ENCODE measurements at regions of chr6 and their contacts with region 1.

Region 1: DNA sequence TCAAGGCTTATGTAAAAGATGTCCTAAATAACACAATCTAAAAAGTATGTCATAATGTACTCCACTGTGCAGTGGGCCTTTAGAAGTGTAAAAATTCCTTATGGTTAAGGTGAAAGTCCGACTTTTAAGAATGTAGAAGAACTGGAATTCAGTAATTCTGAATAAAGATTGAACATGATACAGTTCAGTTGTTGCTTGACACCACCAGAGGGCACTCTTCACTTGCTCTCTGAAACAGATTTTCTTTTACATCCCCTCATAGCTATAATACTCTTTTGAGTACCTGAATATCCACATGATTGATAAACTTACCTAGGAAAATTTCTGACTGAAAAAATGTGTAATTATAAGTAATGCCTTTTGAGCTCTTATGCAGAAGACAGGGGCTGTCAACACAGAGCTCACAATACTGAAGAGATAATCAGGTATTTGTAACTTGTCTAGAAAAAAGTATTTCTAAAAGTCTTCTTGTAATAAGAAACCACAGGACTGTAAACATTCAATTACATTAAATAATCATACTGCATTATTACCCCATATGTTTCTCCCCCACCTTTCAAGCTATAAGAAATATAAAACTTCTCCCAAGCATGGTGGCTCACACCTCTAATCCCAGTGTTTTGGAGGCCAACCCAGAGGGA is 92.1 kb downstream of the POPDC3 start:
- DNase-seq: peak in 1 of 2 experiments; percentile 56
- H3K4me3 ChIP-seq: no peak overlapping the region
- H3K4me3 Mint-ChIP-seq: peak overlapping the region; percentile 27
- H3K27ac Mint-ChIP-seq: no peak overlapping the region
- H3K4me1 ChIP-seq: peaks cover 13% of the 10 kb centered on the region
- H3K4me1 Mint-ChIP-seq: peaks cover 18% of the 10 kb centered on the region
- H3K27me3 ChIP-seq: no peaks in the 10 kb centered on the region
- H3K27me3 Mint-ChIP-seq: no peaks in the 10 kb centered on the region
- CTCF ChIP-seq: peak; percentile 74 to 78

Region 2: GRCh38 chr6:104969785-104970581 is 117.7 kb before region 1 on chr6:
- CTCF ChIA-PET with region 1: no interaction called
- POLR2A ChIA-PET with region 1: no interaction called
- intact Hi-C with region 1: no loop called
- DNase-seq: no peak
- H3K4me3 ChIP-seq: no peak overlapping the region
- H3K4me3 Mint-ChIP-seq: no peak overlapping the region
- H3K27ac Mint-ChIP-seq: no peak overlapping the region
- H3K4me1 ChIP-seq: peaks cover 5% of the 10 kb centered on the region; the same call in 1 of the 2 replicates
- H3K4me1 Mint-ChIP-seq: no peaks in the 10 kb centered on the region
- H3K27me3 ChIP-seq: no peaks in the 10 kb centered on the region
- H3K27me3 Mint-ChIP-seq: no peaks in the 10 kb centered on the region
- CTCF ChIP-seq: no peak

Region 3: DNA sequence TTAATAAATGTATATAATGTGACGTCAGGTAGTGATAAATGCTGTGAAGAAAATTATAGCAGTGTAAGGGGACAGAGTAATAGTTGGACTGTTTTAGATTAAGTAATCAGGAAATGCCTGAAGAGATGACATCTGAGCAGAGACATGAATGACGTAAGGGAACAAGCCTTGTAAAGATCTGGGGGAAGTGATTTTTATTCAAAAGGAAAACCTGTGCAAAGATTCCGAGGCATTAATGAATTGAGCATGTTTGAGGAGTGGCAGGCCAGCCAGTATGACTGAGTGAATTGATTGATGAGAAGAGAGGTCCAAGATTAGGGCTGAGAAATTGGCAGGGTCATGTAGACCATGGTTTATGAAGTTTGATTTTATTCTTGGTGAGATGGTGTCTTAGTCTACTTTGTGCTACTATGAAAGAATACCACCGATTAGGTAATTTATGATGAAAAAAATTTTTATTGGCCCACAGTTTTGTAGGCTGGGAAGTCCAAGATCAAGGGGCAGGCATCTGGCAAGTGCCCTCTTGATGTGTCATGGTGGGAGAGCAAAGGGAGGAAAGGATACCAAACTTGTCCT is 35.7 kb before region 1 on chr6:
- CTCF ChIA-PET with region 1: no interaction called
- POLR2A ChIA-PET with region 1: no interaction called
- intact Hi-C with region 1: no loop called
- DNase-seq: no peak
- H3K4me3 ChIP-seq: no peak overlapping the region
- H3K4me3 Mint-ChIP-seq: no peak overlapping the region
- H3K27ac Mint-ChIP-seq: no peak overlapping the region
- H3K4me1 ChIP-seq: peaks cover 5% of the 10 kb centered on the region
- H3K4me1 Mint-ChIP-seq: no peaks in the 10 kb centered on the region
- H3K27me3 ChIP-seq: no peaks in the 10 kb centered on the region
- H3K27me3 Mint-ChIP-seq: no peaks in the 10 kb centered on the region
- CTCF ChIP-seq: no peak

Region 4: GRCh38 chr6:105136431-105137350 is 49.0 kb after region 1 on chr6:
- CTCF ChIA-PET with region 1: interaction called, 8 read pairs
- POLR2A ChIA-PET with region 1: no interaction called
- intact Hi-C with region 1: loop called (anchors 5 kb)
- DNase-seq: peak; percentile 50 to 69
- H3K4me3 ChIP-seq: peak overlapping the region; percentile 74
- H3K4me3 Mint-ChIP-seq: peak overlapping the region; percentile 76
- H3K27ac Mint-ChIP-seq: no peak overlapping the region
- H3K4me1 ChIP-seq: no peaks in the 10 kb centered on the region
- H3K4me1 Mint-ChIP-seq: no peaks in the 10 kb centered on the region
- H3K27me3 ChIP-seq: no peaks in the 10 kb centered on the region
- H3K27me3 Mint-ChIP-seq: peaks cover 10% of the 10 kb centered on the region
- CTCF ChIP-seq: peak in 1 of 2 experiments; percentile 8

Region 5: DNA sequence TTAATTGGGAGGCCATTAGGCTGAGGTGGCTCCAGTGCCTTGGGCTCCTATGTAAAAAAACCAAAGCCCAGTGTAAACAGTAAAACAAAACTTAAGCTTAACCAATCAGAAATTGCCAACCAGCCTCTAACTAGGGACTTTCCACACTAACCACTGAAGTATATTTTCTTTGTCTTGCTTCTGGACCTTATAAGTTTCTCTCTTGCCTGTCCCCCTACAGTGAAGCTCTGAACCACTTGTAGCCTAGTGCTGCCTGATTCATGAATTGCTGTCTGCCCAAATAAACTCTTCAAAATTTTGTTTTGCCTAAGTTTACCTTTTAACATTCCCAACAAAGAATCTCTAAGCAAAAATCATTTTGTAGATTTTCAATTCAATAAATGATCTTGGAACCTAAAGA is 64.0 kb after region 1 on chr6:
- CTCF ChIA-PET with region 1: no interaction called
- POLR2A ChIA-PET with region 1: no interaction called
- intact Hi-C with region 1: loop called (anchors 2 kb)
- DNase-seq: no peak
- H3K4me3 ChIP-seq: no peak overlapping the region
- H3K4me3 Mint-ChIP-seq: no peak overlapping the region
- H3K27ac Mint-ChIP-seq: no peak overlapping the region
- H3K4me1 ChIP-seq: no peaks in the 10 kb centered on the region
- H3K4me1 Mint-ChIP-seq: no peaks in the 10 kb centered on the region
- H3K27me3 ChIP-seq: no peaks in the 10 kb centered on the region
- H3K27me3 Mint-ChIP-seq: no peaks in the 10 kb centered on the region
- CTCF ChIP-seq: no peak

Region 6: GRCh38 chr6:105272786-105273185 is 185.1 kb after region 1 on chr6:
- CTCF ChIA-PET with region 1: interaction called, 4 read pairs
- POLR2A ChIA-PET with region 1: no interaction called
- intact Hi-C with region 1: loop called (anchors 5 kb)
- DNase-seq: peak; percentile 57 to 70
- H3K4me3 ChIP-seq: no peak overlapping the region
- H3K4me3 Mint-ChIP-seq: no peak overlapping the region
- H3K27ac Mint-ChIP-seq: no peak overlapping the region
- H3K4me1 ChIP-seq: peaks cover 15% of the 10 kb centered on the region
- H3K4me1 Mint-ChIP-seq: peaks cover 16% of the 10 kb centered on the region
- H3K27me3 ChIP-seq: no peaks in the 10 kb centered on the region
- H3K27me3 Mint-ChIP-seq: no peaks in the 10 kb centered on the region
- CTCF ChIP-seq: no peak

Region 7: DNA sequence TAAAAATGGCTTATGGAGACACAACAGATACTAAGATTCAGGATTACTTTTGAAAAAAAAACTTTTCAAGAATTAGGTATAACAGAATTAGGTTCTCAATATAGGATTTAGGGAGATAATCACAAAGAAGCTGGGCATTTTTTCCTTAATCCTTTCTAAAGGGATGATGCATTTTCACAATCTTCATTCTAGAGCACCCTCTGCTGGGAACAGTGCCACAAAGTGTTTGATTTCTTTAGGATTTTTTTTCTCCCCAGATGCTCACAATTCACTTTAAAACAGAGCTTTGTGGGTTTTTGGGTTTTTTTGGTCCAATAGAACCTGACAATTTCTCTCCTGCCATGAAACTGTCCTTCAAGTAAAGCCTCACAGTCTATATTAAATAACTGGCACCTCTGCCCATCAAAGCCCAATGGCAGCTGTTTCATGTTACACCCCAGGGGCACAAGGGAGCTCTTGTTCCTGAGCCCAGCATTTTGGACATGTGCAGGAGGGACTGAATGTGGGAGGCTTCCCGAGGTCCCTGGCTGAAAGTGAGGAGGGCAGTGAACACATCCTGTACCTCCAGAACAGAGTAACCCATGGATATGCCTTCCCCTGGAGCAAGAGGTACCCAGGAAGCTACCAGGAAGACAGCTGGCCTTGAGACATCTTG is 275.5 kb after region 1 on chr6:
- CTCF ChIA-PET with region 1: interaction called, 13 read pairs
- POLR2A ChIA-PET with region 1: no interaction called
- intact Hi-C with region 1: loop called (anchors 1 kb)
- DNase-seq: no peak
- H3K4me3 ChIP-seq: no peak overlapping the region
- H3K4me3 Mint-ChIP-seq: no peak overlapping the region
- H3K27ac Mint-ChIP-seq: no peak overlapping the region
- H3K4me1 ChIP-seq: no peaks in the 10 kb centered on the region
- H3K4me1 Mint-ChIP-seq: peaks cover 6% of the 10 kb centered on the region
- H3K27me3 ChIP-seq: no peaks in the 10 kb centered on the region
- H3K27me3 Mint-ChIP-seq: no peaks in the 10 kb centered on the region
- CTCF ChIP-seq: peak in 1 of 2 experiments; percentile 16

Region 8: DNA sequence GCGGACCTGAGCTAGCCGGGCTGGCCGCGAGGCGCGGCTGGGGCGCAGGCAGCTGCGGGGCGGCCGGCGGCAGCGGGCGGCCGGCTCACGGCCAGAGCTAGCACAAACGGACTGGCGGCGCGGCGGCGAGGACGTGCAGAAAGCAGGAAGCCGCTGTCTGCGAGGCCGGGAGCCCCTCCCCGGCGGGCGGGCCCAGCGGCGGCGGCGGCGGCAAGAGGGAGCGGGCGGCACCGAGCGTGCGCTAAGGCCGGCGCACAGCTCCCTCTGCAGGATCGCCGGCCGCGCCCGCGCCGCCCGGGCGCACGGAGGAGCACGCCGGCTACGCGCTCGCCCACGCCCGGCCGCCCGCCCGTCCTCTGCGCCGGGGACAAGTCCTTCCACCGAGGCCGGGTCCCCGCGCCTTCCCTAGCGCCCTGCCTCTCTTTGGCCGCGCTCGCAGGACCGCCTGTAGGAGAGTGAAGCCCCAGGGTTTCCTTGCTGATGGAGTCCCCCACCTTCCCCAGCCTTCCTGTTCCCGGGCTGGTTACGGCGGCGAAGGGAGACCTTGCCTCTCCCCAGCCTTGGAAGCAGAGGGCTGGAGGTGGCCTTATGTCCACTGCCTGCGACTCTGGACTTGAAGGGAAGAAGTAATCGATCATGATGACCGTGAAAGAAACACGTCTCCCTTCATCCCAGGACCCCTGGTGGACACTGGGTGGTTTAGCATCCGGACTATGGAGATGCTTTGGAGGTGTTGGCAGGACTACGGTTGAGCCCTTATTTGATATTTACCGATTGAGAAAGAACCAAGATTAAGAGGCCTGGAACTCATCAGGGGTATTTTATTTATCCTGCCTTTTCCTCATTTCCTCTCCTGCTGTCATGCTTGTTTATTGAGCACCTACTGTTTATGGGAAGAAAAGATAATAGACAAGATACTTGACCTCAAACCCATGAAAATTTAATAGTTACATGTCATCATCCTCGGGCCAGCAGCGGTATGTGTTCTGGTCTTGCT is 315.5 kb after region 1 on chr6 and contains the start of gene PREP:
- CTCF ChIA-PET with region 1: interaction called, 6 read pairs
- POLR2A ChIA-PET with region 1: no interaction called
- intact Hi-C with region 1: loop called (anchors 1 kb)
- DNase-seq: peak; percentile 82 to 92
- H3K4me3 ChIP-seq: peak within 1 kb of the TSS; percentile 96
- H3K4me3 Mint-ChIP-seq: peak within 1 kb of the TSS; percentile 97
- H3K27ac Mint-ChIP-seq: peak within 1 kb of the TSS; percentile 91
- H3K4me1 ChIP-seq: peaks cover 17% of the 10 kb centered on the region
- H3K4me1 Mint-ChIP-seq: peaks cover 21% of the 10 kb centered on the region
- H3K27me3 ChIP-seq: no peaks in the 10 kb centered on the region
- H3K27me3 Mint-ChIP-seq: no peaks in the 10 kb centered on the region
- CTCF ChIP-seq: peak; percentile 81
- total RNA-seq, gene PREP: 66.5 and 69.9 TPM in 2 replicates

Region 9: GRCh38 chr6:105424175-105424783 is 336.6 kb after region 1 on chr6:
- CTCF ChIA-PET with region 1: interaction called, 4 read pairs
- POLR2A ChIA-PET with region 1: no interaction called
- intact Hi-C with region 1: loop called (anchors 1 kb)
- DNase-seq: peak in 1 of 2 experiments; percentile 62
- H3K4me3 ChIP-seq: no peak overlapping the region
- H3K4me3 Mint-ChIP-seq: no peak overlapping the region
- H3K27ac Mint-ChIP-seq: no peak overlapping the region
- H3K4me1 ChIP-seq: peaks cover 13% of the 10 kb centered on the region
- H3K4me1 Mint-ChIP-seq: peaks cover 14% of the 10 kb centered on the region
- H3K27me3 ChIP-seq: no peaks in the 10 kb centered on the region
- H3K27me3 Mint-ChIP-seq: no peaks in the 10 kb centered on the region
- CTCF ChIP-seq: peak; percentile 68 to 69

Measured in Caco-2 (cell line).